ENCODE measurements at regions of chr9 and their contacts with region 1.

Region 1: GRCh38 chr9:96854073-96854876 is at the start of gene ZNF782:
- DNase-seq: peak; percentile 79
- H3K4me3 Mint-ChIP-seq: peak within 1 kb of the TSS; percentile 100
- H3K27ac Mint-ChIP-seq: peak within 1 kb of the TSS; percentile 100
- H3K4me1 Mint-ChIP-seq: peaks cover 48% of the 10 kb centered on the region
- H3K27me3 Mint-ChIP-seq: peaks cover 17% of the 10 kb centered on the region
- total RNA-seq, gene ZNF782: 4.5 and 4.7 TPM in 2 replicates

Region 2: GRCh38 chr9:96449845-96450612 is 404.2 kb before region 1 on chr9 and contains the start of gene HABP4:
- intact Hi-C with region 1: loop called (anchors 10 kb)
- DNase-seq: peak; percentile 93
- H3K4me3 Mint-ChIP-seq: peak within 1 kb of the TSS; percentile 86
- H3K27ac Mint-ChIP-seq: no peak within 1 kb of the TSS
- H3K4me1 Mint-ChIP-seq: peaks cover 28% of the 10 kb centered on the region
- H3K27me3 Mint-ChIP-seq: peaks cover 11% of the 10 kb centered on the region
- total RNA-seq, gene HABP4: 14.3 and 14.4 TPM in 2 replicates

Region 3: GRCh38 chr9:96813607-96814006 is 40.7 kb before region 1 on chr9:
- intact Hi-C with region 1: no loop called
- DNase-seq: no peak
- H3K4me3 Mint-ChIP-seq: no peak overlapping the region
- H3K27ac Mint-ChIP-seq: no peak overlapping the region
- H3K4me1 Mint-ChIP-seq: no peaks in the 10 kb centered on the region
- H3K27me3 Mint-ChIP-seq: no peaks in the 10 kb centered on the region

Region 4: DNA sequence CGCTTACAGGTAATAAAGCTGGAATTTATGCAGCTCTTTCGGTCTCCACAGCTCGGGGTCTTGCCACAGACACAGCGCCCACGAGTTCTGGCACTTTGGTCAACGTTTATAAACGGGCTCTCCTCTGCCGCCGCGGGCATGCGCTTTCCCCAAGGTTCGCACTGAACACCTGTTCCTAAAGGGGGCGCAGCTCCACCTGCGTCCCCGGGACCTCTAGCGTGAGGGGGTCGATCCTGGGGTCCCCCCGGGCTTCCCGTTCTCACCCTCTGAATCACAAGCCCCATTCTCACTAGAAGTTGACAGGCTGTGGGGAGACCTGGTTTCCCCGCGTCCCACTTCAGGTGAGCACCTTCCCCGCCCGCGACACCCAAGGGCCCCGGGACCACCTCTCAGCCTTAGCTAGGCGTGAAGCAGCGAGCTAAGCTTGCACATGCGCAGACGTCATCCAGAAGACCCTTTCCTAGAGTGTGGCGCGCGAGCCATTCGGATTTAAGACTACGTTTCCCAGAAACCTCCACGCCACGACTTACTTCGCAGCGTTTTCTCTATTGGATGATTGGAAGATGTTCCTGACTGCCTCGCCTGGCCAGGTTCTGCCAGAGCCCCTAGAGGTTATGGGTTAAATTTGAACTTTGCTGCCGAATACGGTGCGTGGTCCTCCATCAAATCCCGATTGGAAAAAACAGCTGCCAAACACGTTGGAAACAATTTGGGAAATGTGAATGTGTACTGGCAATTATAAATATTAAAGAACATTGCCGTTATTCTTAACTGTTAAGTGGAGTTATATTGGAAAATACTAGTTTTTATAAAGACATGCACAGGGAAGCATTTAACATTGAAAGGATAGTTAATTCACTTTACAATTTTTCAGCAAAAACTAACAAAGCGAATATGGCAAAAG is 21.4 kb after region 1 on chr9:
- intact Hi-C with region 1: loop called (anchors 1 kb)
- DNase-seq: peak; percentile 49
- H3K4me3 Mint-ChIP-seq: peak overlapping the region; percentile 86
- H3K27ac Mint-ChIP-seq: peak overlapping the region; percentile 80
- H3K4me1 Mint-ChIP-seq: peaks cover 26% of the 10 kb centered on the region
- H3K27me3 Mint-ChIP-seq: peaks cover 24% of the 10 kb centered on the region

Region 5: GRCh38 chr9:97109194-97109811 is 255.0 kb after region 1 on chr9:
- intact Hi-C with region 1: loop called (anchors 2 kb)
- DNase-seq: no peak
- H3K4me3 Mint-ChIP-seq: no peak overlapping the region
- H3K27ac Mint-ChIP-seq: no peak overlapping the region
- H3K4me1 Mint-ChIP-seq: peaks cover 4% of the 10 kb centered on the region
- H3K27me3 Mint-ChIP-seq: peaks cover 3% of the 10 kb centered on the region

Region 6: DNA sequence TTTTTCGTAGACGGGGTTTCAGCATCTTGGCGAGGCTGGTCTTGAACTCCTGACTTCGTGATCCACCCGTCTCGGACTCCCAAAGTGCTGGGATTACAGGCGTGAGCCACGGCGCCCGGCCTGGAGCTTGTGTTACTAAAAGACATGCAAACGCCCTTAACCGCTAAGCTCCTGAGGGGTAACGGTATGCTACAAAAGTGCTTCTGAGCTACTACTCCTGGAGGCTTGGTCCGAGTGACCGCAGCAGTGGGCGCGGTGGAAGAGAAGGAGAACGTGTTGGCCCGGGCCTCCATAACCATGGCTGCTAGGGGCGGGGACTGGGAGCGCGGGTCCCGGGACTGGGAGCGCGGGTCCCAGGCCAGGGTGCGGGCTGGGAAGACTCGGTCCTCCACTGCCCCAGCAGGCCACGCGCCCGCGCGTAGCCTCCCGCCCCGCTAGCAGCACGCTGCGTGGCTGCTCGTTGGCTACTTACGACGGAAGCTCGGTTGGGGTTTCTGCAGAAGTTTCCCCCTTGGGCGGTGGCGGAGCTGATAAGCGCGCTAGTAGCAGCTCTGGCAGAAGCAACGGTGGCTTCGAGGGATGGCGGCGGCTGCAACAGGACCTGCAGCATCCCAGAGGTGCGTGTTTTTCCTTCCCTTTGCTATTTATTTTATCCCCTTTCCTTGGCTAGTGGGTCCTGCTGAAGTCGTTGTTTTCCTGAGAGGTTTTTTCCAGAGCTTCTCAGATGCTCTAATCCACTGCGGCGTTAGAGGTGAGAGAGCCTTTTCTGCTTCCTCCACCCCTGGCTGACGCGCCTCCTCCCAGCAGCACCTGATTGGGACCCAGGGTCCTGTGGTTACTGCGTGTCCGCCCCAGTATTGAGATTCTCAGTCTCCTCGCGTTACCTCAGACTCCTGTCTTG is 383.9 kb after region 1 on chr9:
- intact Hi-C with region 1: loop called (anchors 5 kb)
- DNase-seq: peak; percentile 74
- H3K4me3 Mint-ChIP-seq: peak overlapping the region; percentile 93
- H3K27ac Mint-ChIP-seq: peak overlapping the region; percentile 91
- H3K4me1 Mint-ChIP-seq: peaks cover 20% of the 10 kb centered on the region
- H3K27me3 Mint-ChIP-seq: peaks cover 2% of the 10 kb centered on the region

Region 7: DNA sequence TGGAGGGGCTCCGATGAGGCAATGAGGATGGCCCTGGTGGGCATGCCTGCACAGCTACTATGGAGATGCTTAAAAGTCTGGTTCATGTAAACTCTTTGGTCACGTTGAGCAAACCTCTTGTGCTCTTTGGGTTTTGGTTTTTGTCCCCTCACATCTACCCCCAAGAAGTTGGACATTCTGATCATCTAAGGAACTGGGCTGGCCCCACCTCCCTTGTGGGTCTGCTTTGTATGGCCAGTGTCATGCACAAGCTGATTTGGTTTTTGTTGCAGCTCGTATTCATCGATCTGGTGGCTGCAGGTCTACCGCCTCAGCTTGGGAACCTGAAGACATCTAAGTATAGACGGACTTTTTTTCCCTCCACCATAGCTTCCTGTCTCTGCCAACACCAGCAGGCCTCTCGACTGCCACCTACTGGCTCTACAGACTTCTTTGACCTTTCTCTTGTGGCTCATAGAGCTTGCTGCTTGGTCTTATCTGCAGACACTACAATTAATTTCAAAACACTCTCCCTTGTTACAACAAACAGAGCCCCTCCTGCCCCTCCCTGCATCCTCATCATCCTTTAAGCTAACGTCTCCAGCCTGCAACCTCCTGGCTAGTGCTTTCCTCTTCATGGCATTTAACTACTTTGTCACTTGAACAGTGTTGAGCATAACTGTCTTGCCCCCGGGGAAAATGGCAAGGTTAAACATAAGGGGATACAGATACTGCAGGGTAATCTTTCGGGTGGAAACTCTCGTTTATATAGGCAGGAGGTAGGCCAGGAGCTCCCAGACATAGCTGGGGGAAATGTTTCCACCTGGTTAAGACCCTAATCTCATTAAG is 744.4 kb after region 1 on chr9:
- intact Hi-C with region 1: loop called (anchors 10 kb)
- DNase-seq: peak; percentile 64
- H3K4me3 Mint-ChIP-seq: no peak overlapping the region
- H3K27ac Mint-ChIP-seq: no peak overlapping the region
- H3K4me1 Mint-ChIP-seq: peaks cover 3% of the 10 kb centered on the region
- H3K27me3 Mint-ChIP-seq: peaks cover 3% of the 10 kb centered on the region

Measured in activated T-helper 2 cell treated with anti-CD3 and anti-CD28 coated beads, Interferon-gamma antibody, Interleukin-2, Interleukin-4, amounts not matched to agents 10 μg/mL and 5 μg/mL and 100 μg/mL, durations not matched to agents 14 hours and 24 hours and 36 hours (primary cell).